CD4-positive, alpha-beta memory T cell (primary cell): ENCODE measurements at regions of chr19 and their contacts with region 1.

Region 1: DNA sequence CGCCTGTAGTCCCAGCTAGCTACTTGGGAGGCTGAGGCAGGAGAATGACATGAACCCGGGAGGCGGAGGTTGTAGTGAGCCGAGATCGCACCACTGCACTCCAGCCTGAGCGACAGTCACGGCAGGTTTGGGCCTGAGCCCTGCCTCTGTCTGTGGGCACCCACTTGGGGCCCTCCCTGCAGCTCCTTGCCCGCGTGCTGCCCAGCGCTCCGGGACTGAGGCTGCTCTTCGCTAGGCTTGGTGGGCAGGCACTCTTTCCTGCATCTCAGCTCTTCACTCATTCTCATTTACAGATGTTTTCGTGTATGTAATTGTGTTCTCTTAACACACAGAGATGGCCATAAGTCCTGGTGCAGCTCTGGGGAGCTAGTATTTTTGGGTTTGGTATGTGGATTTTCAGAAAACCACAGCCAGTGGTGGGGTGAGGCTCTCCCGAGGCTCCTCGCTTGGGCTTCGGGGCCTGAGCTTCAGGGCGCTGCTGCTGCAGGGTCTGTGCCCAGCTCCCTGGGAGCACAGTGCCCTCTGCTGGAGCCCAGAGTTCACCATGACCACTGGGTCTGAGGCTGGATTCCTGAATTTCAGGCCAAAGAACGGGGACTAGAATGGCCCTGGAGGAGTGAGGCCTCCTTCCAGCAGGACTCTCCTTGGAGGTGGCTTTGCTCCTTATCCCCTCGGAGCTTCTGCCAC is 15.2 kb downstream of the UPF1 start:
- DNase-seq: peak; percentile 58 to 64 (median 62)
- H3K4me3 ChIP-seq: no peak overlapping the region
- H3K4me3 Mint-ChIP-seq: peak overlapping the region in 5 of 8 donors; percentile 17 to 70 (median 39)
- H3K27ac ChIP-seq: no peak overlapping the region
- H3K27ac Mint-ChIP-seq: peak overlapping the region; percentile 42 to 89 (median 63)
- H3K4me1 ChIP-seq: peaks cover 66% of the 10 kb centered on the region
- H3K4me1 Mint-ChIP-seq: peaks cover 47 to 80% (median 63%) of the 10 kb centered on the region in 4 donors
- H3K27me3 ChIP-seq: no peaks in the 10 kb centered on the region
- H3K27me3 Mint-ChIP-seq: no peaks in the 10 kb centered on the region

Region 2: GRCh38 chr19:18450931-18451845 is 395.8 kb before region 1 on chr19:
- CTCF ChIA-PET with region 1: interaction called, 28 read pairs
- POLR2A ChIA-PET with region 1: no interaction called
- intact Hi-C with region 1: loop called (anchors 5 kb)
- DNase-seq: peak; percentile 80 to 87 (median 82)
- H3K4me3 ChIP-seq: no peak overlapping the region
- H3K4me3 Mint-ChIP-seq: peak overlapping the region in 1 of 8 donors; percentile 35
- H3K27ac ChIP-seq: no peak overlapping the region
- H3K27ac Mint-ChIP-seq: peak overlapping the region in 5 of 7 donors; percentile 22 to 77 (median 70)
- H3K4me1 ChIP-seq: peaks cover 5% of the 10 kb centered on the region
- H3K4me1 Mint-ChIP-seq: peaks cover 3 to 19% (median 7%) of the 10 kb centered on the region in 4 donors
- H3K27me3 ChIP-seq: no peaks in the 10 kb centered on the region
- H3K27me3 Mint-ChIP-seq: no peaks in the 10 kb centered on the region

Region 3: DNA sequence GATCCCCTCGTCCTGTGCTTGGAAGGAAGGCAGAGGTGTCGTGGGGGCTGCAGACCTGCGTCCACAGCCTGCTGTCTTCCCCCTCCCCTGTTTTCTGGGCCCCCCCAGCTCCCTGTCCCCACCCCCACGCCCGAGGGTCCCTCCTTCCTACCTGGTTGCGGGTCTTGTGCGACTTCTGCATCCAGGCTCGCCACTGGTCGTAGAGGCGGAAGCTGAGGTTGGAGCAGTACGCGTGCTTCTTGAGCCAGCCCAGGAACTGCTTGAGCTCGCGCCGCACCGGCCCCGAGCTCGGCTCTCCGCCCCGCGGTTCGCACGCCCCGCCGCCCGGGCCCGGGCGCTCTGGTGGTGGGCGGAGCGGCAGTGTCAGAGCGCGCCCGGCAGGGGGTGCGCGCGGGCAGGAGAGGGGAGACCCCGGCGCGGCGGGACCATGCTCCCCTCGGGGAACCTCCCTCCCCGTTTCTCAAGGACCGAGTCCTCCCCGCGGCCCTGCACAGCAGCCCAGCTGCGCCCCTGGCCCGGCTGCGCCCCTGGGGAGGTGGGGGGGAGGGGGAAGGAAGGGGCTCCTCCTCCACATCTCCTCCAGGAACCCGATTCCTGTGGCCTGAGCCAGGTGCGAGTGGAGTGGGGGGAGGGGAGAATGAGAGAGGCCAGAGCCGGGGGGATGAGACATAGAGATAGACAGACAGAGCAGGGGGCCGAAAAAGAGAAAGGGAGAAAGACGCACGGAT is 252.7 kb before region 1 on chr19:
- CTCF ChIA-PET with region 1: interaction called, 31 read pairs
- POLR2A ChIA-PET with region 1: interaction called, 7 read pairs
- intact Hi-C with region 1: loop called (anchors 1 kb)
- DNase-seq: peak; percentile 69 to 80 (median 75)
- H3K4me3 ChIP-seq: peak overlapping the region; percentile 52 to 57
- H3K4me3 Mint-ChIP-seq: peak overlapping the region; percentile 69 to 85 (median 76)
- H3K27ac ChIP-seq: peak overlapping the region; percentile 50
- H3K27ac Mint-ChIP-seq: peak overlapping the region in 6 of 7 donors; percentile 56 to 91 (median 78)
- H3K4me1 ChIP-seq: peaks cover 32% of the 10 kb centered on the region
- H3K4me1 Mint-ChIP-seq: peaks cover 18 to 36% (median 25%) of the 10 kb centered on the region in 4 donors
- H3K27me3 ChIP-seq: no peaks in the 10 kb centered on the region
- H3K27me3 Mint-ChIP-seq: peaks cover 0 to under 1% of the 10 kb centered on the region in 2 donors

Region 4: GRCh38 chr19:18716857-18717256 is 130.1 kb before region 1 on chr19:
- CTCF ChIA-PET with region 1: no interaction called
- POLR2A ChIA-PET with region 1: no interaction called
- intact Hi-C with region 1: no loop called
- DNase-seq: no peak
- H3K4me3 ChIP-seq: no peak overlapping the region
- H3K4me3 Mint-ChIP-seq: no peak overlapping the region
- H3K27ac ChIP-seq: no peak overlapping the region
- H3K27ac Mint-ChIP-seq: peak overlapping the region in 4 of 7 donors; percentile 3 to 81 (median 41)
- H3K4me1 ChIP-seq: no peaks in the 10 kb centered on the region
- H3K4me1 Mint-ChIP-seq: peaks cover 8 to 17% (median 13%) of the 10 kb centered on the region in 4 donors
- H3K27me3 ChIP-seq: no peaks in the 10 kb centered on the region
- H3K27me3 Mint-ChIP-seq: no peaks in the 10 kb centered on the region

Region 5: DNA sequence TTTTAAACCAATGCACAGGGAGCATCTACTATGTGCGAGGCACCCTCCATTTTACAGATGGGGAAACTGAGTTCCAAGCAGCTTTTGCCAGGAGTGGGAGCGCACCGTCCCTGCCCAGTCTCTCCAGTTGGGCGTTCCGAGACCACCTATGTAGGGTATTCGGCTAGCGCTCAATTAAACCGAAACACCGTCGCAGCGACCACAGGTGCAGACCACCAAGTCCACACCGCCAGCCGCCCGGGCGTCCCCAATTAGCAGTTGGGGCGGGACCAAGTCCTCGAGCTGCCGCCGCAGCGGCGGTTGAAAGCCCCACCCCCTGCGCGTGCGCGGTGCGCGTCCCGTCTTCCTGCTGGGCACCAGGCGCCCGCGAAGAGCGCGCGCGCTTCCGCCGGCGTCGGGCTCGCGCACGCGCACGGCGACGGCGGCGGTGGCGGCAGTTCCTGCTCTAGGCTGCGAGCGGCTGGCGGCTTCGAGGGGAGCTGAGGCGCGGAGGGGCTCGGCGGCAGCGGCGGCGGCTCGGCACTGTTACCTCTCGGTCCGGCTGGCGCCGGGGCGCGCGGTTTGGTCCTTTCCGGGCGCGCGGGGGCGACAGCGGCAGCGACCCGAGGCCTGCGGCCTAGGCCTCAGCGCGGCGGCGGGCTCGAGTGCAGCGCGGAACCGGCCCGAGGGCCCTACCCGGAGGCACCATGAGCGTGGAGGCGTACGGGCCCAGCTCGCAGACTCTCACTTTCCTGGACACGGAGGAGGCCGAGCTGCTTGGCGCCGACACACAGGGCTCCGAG is 15.3 kb before region 1 on chr19 and contains the start of gene UPF1:
- CTCF ChIA-PET with region 1: interaction called, 12 read pairs
- POLR2A ChIA-PET with region 1: interaction called, 19 read pairs
- intact Hi-C with region 1: no loop called
- DNase-seq: peak; percentile 94 to 97 (median 95)
- H3K4me3 ChIP-seq: peak within 1 kb of the TSS; percentile 64 to 85
- H3K4me3 Mint-ChIP-seq: peak within 1 kb of the TSS; percentile 90 to 99 (median 95)
- H3K27ac ChIP-seq: peak within 1 kb of the TSS; percentile 75
- H3K27ac Mint-ChIP-seq: peak within 1 kb of the TSS; percentile 89 to 96 (median 93)
- H3K4me1 ChIP-seq: peaks cover 36% of the 10 kb centered on the region
- H3K4me1 Mint-ChIP-seq: peaks cover 29 to 47% (median 36%) of the 10 kb centered on the region in 4 donors
- H3K27me3 ChIP-seq: no peaks in the 10 kb centered on the region
- H3K27me3 Mint-ChIP-seq: peaks cover 2 to 5% of the 10 kb centered on the region in 2 donors
- total RNA-seq, gene UPF1: 127 to 130 TPM

Region 6: DNA sequence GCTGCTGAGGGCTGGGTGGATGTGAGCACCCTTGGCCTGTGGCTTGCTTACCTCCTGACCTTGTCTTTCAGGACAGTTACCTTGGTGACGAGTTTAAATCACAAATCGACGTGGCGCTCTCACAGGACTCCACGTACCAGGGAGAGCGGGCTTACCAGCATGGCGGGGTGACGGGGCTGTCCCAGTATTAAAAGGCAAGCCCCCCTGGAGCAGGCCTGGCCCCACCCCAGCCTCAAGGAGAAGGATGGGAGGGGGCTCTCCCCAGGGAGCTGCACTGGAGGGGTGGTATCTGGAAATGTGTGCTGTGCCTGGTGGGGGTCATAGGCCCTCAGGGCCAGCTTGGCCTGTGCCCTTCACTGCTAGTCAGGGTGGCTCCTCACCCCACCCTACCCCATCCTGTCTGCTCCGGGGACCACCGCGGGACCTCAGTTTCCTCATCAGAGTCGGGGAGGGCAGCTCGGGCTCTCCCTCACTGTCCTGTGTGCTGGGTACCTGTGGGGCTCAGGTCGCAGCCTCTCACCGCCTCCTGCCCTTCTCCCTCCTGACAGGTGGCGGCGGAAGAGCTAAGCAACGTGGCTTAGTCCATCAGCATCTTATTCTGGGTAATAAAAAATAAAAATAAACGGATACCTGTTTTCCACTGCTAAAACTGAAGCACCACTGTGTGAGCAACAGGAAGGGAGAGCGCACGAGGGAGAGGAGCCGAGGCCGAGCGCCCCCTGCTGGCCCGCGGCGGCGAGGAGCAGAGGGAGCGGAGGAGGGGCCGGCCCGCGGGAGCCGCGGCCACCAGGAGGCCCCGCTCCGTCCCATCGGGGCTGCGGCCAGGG is 19.2 kb after region 1 on chr19:
- CTCF ChIA-PET with region 1: interaction called, 10 read pairs
- POLR2A ChIA-PET with region 1: interaction called, 3 read pairs
- intact Hi-C with region 1: no loop called
- DNase-seq: peak in 4 of 5 donors; percentile 60 to 64 (median 62)
- H3K4me3 ChIP-seq: no peak overlapping the region
- H3K4me3 Mint-ChIP-seq: no peak overlapping the region
- H3K27ac ChIP-seq: no peak overlapping the region
- H3K27ac Mint-ChIP-seq: peak overlapping the region in 2 of 7 donors; percentile 63 to 67
- H3K4me1 ChIP-seq: peaks cover 4% of the 10 kb centered on the region
- H3K4me1 Mint-ChIP-seq: peaks cover 2 to 15% (median 6%) of the 10 kb centered on the region in 4 donors
- H3K27me3 ChIP-seq: no peaks in the 10 kb centered on the region
- H3K27me3 Mint-ChIP-seq: no peaks in the 10 kb centered on the region